Motor neuron (in vitro differentiated cells): ENCODE measurements at regions of chr6 and their contacts with region 1.

Region 1: GRCh38 chr6:37029249-37029971 is 24.0 kb downstream of the FGD2 start:
- ATAC-seq: peak; percentile 90 to 100 (median 96)
- H3K4me3 ChIP-seq: no peak overlapping the region
- H3K27ac ChIP-seq: no peak overlapping the region
- H3K4me1 ChIP-seq: no peaks in the 10 kb centered on the region

Region 2: GRCh38 chr6:36289281-36289878 is 740.0 kb before region 1 on chr6:
- in situ Hi-C with region 1: no loop called
- ATAC-seq: peak in 6 of 8 experiments; percentile 8 to 73 (median 30)
- H3K4me3 ChIP-seq: no peak overlapping the region
- H3K27ac ChIP-seq: no peak overlapping the region
- H3K4me1 ChIP-seq: peaks cover 13 to 28% of the 10 kb centered on the region in 2 donors

Region 3: DNA sequence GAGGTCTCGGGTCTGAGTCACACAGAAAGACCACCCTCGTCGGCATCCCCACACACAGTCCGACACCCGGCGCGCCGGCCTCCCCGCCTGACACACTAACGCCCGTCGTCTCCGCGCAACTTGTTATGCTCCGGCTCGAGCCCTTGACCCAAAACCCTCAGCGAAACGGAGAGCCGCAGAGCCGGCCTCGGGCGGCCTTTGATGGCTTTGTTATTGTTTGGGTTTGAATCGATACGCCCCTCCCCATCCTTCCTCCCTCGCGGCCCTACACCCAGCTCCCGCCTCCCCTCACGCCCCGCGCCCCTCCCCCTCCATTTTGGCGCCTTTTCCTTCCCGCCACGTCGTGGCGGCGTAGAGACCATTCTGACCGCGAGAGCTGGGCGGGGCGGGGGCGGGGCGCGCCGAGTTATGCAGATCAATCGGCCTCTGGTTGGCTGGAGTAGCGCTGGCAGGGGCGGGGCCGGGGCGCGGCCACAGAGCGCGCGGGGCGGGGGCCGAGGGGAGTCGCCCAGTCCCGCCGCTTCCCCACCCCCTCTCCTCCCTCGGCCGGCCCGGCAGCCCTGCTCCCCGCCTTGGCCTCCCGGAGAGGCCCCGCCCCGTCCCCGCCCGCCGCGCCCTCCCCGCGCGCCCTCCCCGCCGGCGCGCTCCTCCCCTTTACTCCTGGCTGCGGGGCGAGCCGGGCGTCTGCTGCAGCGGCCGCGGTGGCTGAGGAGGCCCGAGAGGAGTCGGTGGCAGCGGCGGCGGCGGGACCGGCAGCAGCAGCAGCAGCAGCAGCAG is 140.3 kb after region 1 on chr6 and contains the start of gene PIM1:
- in situ Hi-C with region 1: loop called in 1 of 9 experiments (anchors 10 kb)
- ATAC-seq: peak; percentile 45 to 84 (median 78)
- H3K4me3 ChIP-seq: peak within 1 kb of the TSS; percentile 56 to 93 (median 81)
- H3K27ac ChIP-seq: peak within 1 kb of the TSS; percentile 95
- H3K4me1 ChIP-seq: peaks cover 10 to 13% of the 10 kb centered on the region in 2 donors
- total RNA-seq, gene PIM1: 3.1 to 26.3 (median 17.9) TPM

Region 4: DNA sequence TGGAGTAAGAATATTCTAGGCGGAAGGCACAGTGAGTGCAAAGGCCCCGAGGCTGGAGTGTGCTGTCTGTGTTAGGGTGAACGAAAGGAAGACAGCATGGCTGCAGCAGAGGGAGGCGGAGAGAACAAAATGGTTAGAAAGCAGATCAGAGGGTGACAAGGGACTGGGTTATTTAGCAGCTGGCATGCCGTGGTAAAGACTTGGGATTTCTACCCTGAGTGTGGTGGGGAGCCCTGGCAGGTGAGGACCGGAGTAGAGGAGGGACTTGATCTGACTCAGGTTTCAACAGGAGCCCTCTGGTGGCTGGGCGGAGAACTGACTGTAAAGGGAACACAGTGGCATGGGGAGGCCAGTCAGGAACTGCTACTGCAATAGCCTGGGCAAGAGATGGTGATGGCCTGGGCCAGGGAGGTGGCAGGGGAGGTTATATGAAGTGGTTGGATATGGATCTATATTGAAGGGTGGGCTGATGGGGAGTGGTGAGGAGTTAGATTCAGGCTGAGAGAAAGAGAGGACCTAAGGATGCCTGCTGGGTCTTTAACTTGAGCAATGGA is 178.6 kb after region 1 on chr6:
- in situ Hi-C with region 1: loop called in 2 of 9 experiments (anchors 10 to 25 kb)
- ATAC-seq: peak in 7 of 8 experiments; percentile 18 to 87 (median 29)
- H3K4me3 ChIP-seq: no peak overlapping the region
- H3K27ac ChIP-seq: no peak overlapping the region
- H3K4me1 ChIP-seq: peaks cover 2 to 3% of the 10 kb centered on the region in 2 donors

Region 5: GRCh38 chr6:37222125-37222967 is 192.9 kb after region 1 on chr6:
- in situ Hi-C with region 1: loop called in 1 of 9 experiments (anchors 25 kb)
- ATAC-seq: peak; percentile 90 to 96 (median 92)
- H3K4me3 ChIP-seq: peak overlapping the region; percentile 19 to 44 (median 38)
- H3K27ac ChIP-seq: peak overlapping the region; percentile 27 to 50
- H3K4me1 ChIP-seq: peaks cover 8% of the 10 kb centered on the region in 2 donors

Region 6: GRCh38 chr6:37406726-37407356 is 377.4 kb after region 1 on chr6:
- in situ Hi-C with region 1: no loop called
- ATAC-seq: no peak
- H3K4me3 ChIP-seq: no peak overlapping the region
- H3K27ac ChIP-seq: no peak overlapping the region
- H3K4me1 ChIP-seq: no peaks in the 10 kb centered on the region